Tibial artery (tissue), 4 donors: ENCODE measurements at regions of chr18 and their contacts with region 1.

Region 1: GRCh38 chr18:57057890-57058289 is 89.0 kb upstream of the BOD1L2 start:
- DNase-seq: no peak
- H3K4me3 ChIP-seq: no peak overlapping the region
- H3K27ac ChIP-seq: no peak overlapping the region
- H3K4me1 ChIP-seq: no peaks in the 10 kb centered on the region
- H3K27me3 ChIP-seq: no peaks in the 10 kb centered on the region
- CTCF ChIP-seq: no peak

Region 2: DNA sequence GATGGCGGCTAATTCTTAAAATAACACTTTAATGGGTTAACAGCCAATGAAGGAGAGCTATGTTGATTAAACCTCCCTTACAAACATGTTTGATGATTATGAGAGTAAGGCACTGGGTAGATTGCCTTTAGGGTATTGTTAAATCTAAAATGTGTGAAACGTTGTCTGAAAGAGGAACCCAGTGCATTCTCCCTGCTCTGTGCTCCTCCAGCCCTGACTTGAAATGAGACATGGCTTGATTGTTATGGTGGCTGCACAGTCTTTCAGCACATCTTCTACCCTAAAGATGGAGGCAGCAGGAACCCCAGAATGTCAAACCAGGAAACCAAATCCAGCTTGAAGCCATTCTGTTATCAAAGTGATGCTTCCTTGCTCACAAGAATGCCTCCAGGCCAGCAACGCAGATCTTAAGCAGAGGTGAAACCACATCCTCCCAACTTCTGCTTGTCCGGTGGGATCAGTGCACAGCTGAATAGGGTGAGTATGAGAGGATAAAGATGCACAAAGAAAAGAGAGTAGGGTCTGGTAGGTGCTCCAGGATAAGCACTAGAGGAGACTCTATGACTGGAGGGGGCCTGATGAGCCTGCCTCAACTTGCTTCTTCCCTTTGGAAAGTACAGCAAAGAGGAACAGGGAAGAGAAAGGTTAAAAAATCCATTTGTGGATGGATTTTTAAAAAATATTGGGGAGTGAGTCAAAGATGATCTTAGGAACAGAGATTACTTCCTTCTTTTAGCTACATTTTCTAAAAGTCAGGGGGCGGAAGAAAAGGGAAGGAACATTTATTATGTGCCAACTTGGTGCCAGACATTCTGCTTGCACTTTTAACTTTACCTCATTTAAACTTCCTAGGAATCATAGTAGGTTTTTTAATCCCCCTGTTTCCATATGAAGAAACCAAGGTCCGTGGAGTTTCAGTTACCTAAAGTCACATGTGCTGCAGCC is 942.5 kb before region 1 on chr18:
- intact Hi-C with region 1: loop called (anchors 5 kb)
- DNase-seq: no peak
- H3K4me3 ChIP-seq: no peak overlapping the region
- H3K27ac ChIP-seq: no peak overlapping the region
- H3K4me1 ChIP-seq: no peaks in the 10 kb centered on the region
- H3K27me3 ChIP-seq: no peaks in the 10 kb centered on the region
- CTCF ChIP-seq: no peak

Region 3: DNA sequence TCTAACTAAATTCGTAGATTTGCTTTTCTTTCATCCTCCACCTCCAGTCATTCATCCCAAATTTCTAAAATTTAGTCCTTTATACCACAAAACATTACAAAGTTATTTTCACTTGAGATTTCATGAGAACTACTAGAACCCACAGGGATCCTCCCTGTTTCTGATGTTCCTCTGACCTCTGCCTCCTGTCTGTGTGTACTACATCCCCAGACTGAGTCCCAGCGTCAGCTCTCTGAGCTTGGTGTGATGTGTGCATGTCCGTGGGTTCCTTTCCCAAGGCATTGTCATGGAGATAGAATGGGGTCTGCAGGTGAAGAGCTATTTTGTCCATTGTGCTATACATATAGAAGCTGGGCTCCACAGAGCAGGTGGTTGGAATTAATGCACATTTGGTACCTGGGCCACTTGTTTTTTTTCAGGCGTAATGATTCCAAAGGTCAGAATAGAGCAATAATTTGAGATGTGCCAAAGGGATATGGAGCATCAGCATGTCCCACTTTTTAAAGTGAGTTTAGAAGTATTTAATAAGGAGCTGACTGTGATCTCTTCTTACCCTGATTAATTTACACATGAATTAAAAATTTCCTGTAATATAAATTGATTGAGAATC is 62.2 kb before region 1 on chr18:
- intact Hi-C with region 1: no loop called
- DNase-seq: no peak
- H3K4me3 ChIP-seq: no peak overlapping the region
- H3K27ac ChIP-seq: no peak overlapping the region
- H3K4me1 ChIP-seq: peaks cover 0 to 13% (median 1%) of the 10 kb centered on the region in 4 donors
- H3K27me3 ChIP-seq: no peaks in the 10 kb centered on the region
- CTCF ChIP-seq: no peak

Region 4: GRCh38 chr18:57008001-57008686 is 49.7 kb before region 1 on chr18:
- intact Hi-C with region 1: no loop called
- DNase-seq: peak in 1 of 2 donors; percentile 23
- H3K4me3 ChIP-seq: no peak overlapping the region
- H3K27ac ChIP-seq: no peak overlapping the region
- H3K4me1 ChIP-seq: peaks cover 0 to 23% (median 9%) of the 10 kb centered on the region in 4 donors
- H3K27me3 ChIP-seq: no peaks in the 10 kb centered on the region
- CTCF ChIP-seq: no peak